ENCODE measurements at regions of chr20 and their contacts with region 1.

Region 1: DNA sequence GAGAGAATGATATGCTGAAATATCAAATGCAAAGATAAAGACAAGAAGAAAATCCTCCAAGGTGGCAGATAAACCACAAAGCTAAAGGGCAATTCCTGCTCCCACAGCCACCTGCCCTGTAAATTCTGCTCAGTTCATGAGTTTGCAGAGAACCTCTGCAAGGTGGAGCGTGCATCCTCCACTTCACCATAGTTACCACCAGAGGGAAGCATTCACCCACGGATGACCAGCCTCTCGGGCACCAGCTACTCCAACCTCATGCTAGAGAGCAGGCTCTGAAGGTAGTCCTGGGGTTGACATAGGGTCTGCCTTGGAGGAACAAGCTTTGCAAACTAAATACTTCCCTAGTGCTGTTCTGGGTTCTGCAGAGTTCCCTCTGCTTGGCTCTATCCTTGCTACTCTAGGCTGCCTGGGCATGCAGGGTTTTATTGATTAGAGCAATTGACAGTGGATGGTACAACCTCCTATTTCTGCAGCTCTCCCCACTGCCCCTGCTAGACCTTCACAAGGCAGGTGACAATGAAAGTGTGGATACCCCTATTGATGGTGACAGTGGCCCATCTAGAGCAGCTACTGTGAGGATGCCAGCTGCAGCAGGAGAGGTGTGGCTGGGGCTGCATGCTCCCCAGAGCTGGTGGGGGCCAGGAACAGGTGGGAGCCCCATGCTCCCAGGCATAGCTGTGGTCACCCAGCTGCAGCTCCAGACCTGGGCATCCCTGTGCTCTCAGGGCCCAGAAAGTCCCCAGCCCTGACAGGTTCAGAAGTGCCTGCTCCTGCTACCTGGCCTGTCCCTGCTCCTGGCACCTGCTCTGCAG is 51.1 kb downstream of the GGTLC1 start:
- DNase-seq: peak; percentile 55
- H3K4me3 ChIP-seq: peak overlapping the region in 1 of 2 experiments; percentile 55; a peak in 1 of 4 replicates
- H3K27ac ChIP-seq: no peak overlapping the region
- H3K4me1 ChIP-seq: no peaks in the 10 kb centered on the region
- H3K27me3 ChIP-seq: no peaks in the 10 kb centered on the region
- CTCF ChIP-seq: peak; percentile 64
- EP300 ChIP-seq: no peak
- RAD21 ChIP-seq: peak; percentile 89

Region 2: GRCh38 chr20:23889775-23890211 is 47.7 kb before region 1 on chr20:
- CTCF ChIA-PET with region 1: interaction called, 10 read pairs
- POLR2A ChIA-PET with region 1: no interaction called
- DNase-seq: peak; percentile 34
- H3K4me3 ChIP-seq: no peak overlapping the region
- H3K27ac ChIP-seq: no peak overlapping the region
- H3K4me1 ChIP-seq: no peaks in the 10 kb centered on the region
- H3K27me3 ChIP-seq: no peaks in the 10 kb centered on the region
- CTCF ChIP-seq: peak; percentile 66
- EP300 ChIP-seq: no peak
- RAD21 ChIP-seq: peak; percentile 80

Region 3: DNA sequence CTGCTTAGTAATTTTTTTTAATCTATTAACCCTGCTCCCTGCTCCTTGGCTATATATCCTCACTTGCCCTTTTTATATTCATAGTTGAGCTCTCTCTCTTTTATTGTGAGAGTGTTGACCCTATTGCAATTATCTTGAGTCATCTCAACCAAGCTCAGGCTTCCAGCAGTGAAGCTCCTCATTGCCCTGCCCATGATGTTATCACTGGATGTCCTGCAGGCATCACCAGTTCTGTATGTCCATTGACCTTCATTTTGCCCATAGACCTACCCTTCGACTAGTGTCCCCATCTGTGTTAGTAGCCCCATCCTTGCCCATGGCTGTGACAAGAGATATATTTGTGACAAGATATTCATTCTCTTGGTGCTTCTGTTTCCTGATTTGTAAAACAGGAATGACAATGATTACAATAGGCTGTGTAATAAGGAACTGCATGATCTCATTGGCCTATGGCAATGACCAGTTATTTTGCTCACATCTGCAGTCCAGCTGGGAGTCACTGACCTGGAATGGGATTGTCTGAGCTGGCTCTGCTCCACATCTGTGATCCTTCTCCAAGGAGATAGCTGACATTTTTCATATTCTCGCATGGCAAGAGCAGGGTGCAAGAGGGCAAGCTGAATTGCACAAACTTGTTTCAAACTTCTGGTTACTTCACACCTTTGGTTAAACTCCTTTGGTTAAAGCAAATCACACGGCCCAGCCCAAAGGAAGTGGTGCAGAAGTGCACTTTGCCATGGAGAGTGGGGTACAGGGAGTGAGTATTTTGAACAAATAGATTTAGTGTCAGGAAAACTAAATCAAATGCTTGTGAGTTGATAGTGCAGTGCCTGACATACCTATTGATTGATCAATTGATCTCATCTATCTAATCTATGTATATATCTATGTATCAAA is 10.3 kb before region 1 on chr20:
- CTCF ChIA-PET with region 1: interaction called, 10 read pairs
- POLR2A ChIA-PET with region 1: no interaction called
- DNase-seq: peak; percentile 34
- H3K4me3 ChIP-seq: no peak overlapping the region
- H3K27ac ChIP-seq: no peak overlapping the region
- H3K4me1 ChIP-seq: no peaks in the 10 kb centered on the region; a peak in 1 of 4 replicates
- H3K27me3 ChIP-seq: no peaks in the 10 kb centered on the region
- CTCF ChIP-seq: no peak
- EP300 ChIP-seq: no peak
- RAD21 ChIP-seq: no peak

Region 4: DNA sequence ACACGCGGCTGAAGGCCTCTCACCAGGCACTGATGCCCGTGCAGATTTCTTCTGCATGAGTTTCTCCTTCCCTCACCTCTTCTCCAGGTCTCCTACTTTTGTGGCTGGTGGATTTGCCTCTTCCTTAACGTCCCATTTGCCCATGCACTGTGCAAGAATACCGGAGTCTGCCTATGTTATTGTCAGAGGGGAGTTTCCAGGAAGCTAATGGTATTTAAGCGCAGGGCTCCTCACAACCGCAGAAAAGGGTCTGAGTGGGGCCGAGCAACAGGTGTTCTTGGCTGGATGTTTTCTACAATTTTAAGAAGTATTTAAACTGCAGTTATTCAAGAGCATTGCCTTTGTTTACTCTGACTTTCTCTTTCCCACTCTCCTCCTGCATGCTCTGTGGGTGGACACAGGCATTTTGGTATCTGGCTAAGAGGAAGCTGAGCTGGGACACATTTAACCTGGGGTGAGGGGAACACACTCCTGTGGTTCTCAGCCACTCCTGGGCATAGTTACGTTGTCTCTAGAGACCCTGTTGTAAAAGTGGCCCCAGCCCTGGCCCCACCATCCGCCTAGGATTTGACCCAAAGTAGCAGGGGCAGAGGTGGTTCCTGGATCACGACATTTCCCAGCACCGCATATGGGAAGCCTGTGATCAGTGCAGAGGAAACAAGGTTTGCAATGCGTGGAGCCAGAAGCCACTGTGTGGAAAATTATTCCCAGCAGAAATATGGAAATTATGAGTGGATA is 16.7 kb after region 1 on chr20:
- CTCF ChIA-PET with region 1: interaction called, 16 read pairs
- POLR2A ChIA-PET with region 1: no interaction called
- DNase-seq: no peak
- H3K4me3 ChIP-seq: no peak overlapping the region
- H3K27ac ChIP-seq: no peak overlapping the region
- H3K4me1 ChIP-seq: no peaks in the 10 kb centered on the region
- H3K27me3 ChIP-seq: no peaks in the 10 kb centered on the region
- CTCF ChIP-seq: no peak
- EP300 ChIP-seq: no peak
- RAD21 ChIP-seq: no peak

Region 5: GRCh38 chr20:24060851-24061590 is 123.5 kb after region 1 on chr20:
- CTCF ChIA-PET with region 1: no interaction called
- POLR2A ChIA-PET with region 1: no interaction called
- DNase-seq: no peak
- H3K4me3 ChIP-seq: no peak overlapping the region
- H3K27ac ChIP-seq: no peak overlapping the region
- H3K4me1 ChIP-seq: no peaks in the 10 kb centered on the region
- H3K27me3 ChIP-seq: no peaks in the 10 kb centered on the region; the same call in 1 of the 2 replicates
- CTCF ChIP-seq: no peak
- EP300 ChIP-seq: no peak
- RAD21 ChIP-seq: no peak

Region 6: GRCh38 chr20:24917797-24918578 is 980.5 kb after region 1 on chr20:
- CTCF ChIA-PET with region 1: interaction called, 16 read pairs
- POLR2A ChIA-PET with region 1: no interaction called
- DNase-seq: peak; percentile 85
- H3K4me3 ChIP-seq: no peak overlapping the region; a peak in 1 of 4 replicates
- H3K27ac ChIP-seq: no peak overlapping the region
- H3K4me1 ChIP-seq: no peaks in the 10 kb centered on the region
- H3K27me3 ChIP-seq: no peaks in the 10 kb centered on the region
- CTCF ChIP-seq: peak; percentile 87
- EP300 ChIP-seq: no peak
- RAD21 ChIP-seq: peak; percentile 92